ENCODE measurements at regions of chr15 and their contacts with region 1.

Region 1: GRCh38 chr15:78804391-78804792 is 6.9 kb downstream of the ADAMTS7 start:
- DNase-seq: peak in 2 of 10 donors; percentile 35 to 48
- H3K4me3 ChIP-seq: peak overlapping the region in 10 of 59 donors; percentile 4 to 32 (median 20)
- H3K27ac ChIP-seq: peak overlapping the region in 1 of 59 donors; percentile 37
- H3K27me3 ChIP-seq: peaks cover 0 to 5% (median 0%) of the 10 kb centered on the region in 45 donors
- CTCF ChIP-seq: no peak

Region 2: GRCh38 chr15:78654272-78654671 is 150.1 kb before region 1 on chr15:
- intact Hi-C with region 1: no loop called
- DNase-seq: no peak
- H3K4me3 ChIP-seq: no peak overlapping the region
- H3K27ac ChIP-seq: no peak overlapping the region
- H3K27me3 ChIP-seq: peaks cover 0 to 8% (median 0%) of the 10 kb centered on the region in 45 donors
- CTCF ChIP-seq: no peak

Region 3: GRCh38 chr15:78750566-78750965 is 53.8 kb before region 1 on chr15:
- intact Hi-C with region 1: no loop called
- DNase-seq: peak in 3 of 10 donors; percentile 14 to 40 (median 22)
- H3K4me3 ChIP-seq: peak overlapping the region in 38 of 59 donors; percentile 1 to 51 (median 28)
- H3K27ac ChIP-seq: peak overlapping the region in 19 of 59 donors; percentile 3 to 82 (median 46)
- H3K27me3 ChIP-seq: no peaks in the 10 kb centered on the region
- CTCF ChIP-seq: no peak

Region 4: GRCh38 chr15:78761891-78762385 is 42.5 kb before region 1 on chr15:
- intact Hi-C with region 1: loop called in 1 of 2 experiments (anchors 5 kb)
- DNase-seq: peak in 4 of 10 donors; percentile 15 to 27 (median 20)
- H3K4me3 ChIP-seq: no peak overlapping the region
- H3K27ac ChIP-seq: no peak overlapping the region
- H3K27me3 ChIP-seq: no peaks in the 10 kb centered on the region
- CTCF ChIP-seq: no peak